GM12878 (cell line): ENCODE measurements at regions of chrX and their contacts with region 1.

Region 1: GRCh38 chrX:137062915-137063617 is 29.3 kb upstream of the GPR101 start:
- DNase-seq: no peak
- ATAC-seq: no peak
- H3K4me3 ChIP-seq: no peak overlapping the region
- H3K27ac ChIP-seq: no peak overlapping the region
- H3K4me1 ChIP-seq: no peaks in the 10 kb centered on the region
- H3K27me3 ChIP-seq: no peaks in the 10 kb centered on the region
- CTCF ChIP-seq: no peak
- EP300 ChIP-seq: no peak
- POLR2A ChIP-seq: no peak
- RAD21 ChIP-seq: no peak

Region 2: DNA sequence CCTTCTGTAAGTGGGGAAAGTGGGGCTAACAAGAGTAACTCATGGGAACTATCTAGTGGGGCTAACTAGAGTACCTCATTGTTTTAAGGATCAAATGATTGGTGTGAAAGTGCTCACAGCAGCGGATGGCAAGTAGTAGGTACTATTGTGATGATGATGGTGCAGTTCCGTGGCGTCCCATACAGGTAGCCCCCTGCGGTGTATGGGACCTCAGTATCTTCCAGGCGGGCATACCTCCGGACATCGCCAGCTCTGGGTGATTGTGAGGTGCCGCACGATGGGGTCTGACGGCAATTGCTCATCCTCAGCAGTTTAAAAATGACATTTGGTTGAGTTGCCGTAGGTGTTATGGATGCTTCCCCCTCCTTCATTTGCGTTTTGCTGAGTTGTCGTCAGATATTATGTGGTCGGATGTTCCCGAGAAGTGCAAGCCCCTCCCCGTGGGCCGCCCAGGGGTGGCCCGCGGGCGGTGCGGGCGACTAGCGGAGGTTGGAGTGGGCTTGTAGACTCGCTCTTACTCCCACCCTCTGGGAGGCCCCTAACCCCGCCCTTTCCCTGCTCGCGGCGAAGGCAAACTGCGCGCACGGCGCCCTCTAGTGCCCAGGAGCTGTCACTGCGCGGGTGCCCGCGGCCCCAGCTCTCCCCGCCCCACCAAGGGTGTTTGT is 11.0 kb before region 1 on chrX:
- CTCF ChIA-PET with region 1: interaction called, 10 read pairs
- POLR2A ChIA-PET with region 1: no interaction called
- RAD21 ChIA-PET with region 1: no interaction called
- SMC1A ChIA-PET with region 1: no interaction called
- in situ Hi-C with region 1: no loop called
- intact Hi-C with region 1: no loop called
- DNase-seq: peak; percentile 1
- ATAC-seq: peak; percentile 99
- H3K4me3 ChIP-seq: peak overlapping the region; percentile 53; the same call in 1 of the 2 replicates
- H3K27ac ChIP-seq: no peak overlapping the region
- H3K4me1 ChIP-seq: no peaks in the 10 kb centered on the region
- H3K27me3 ChIP-seq: 0 out of 4 replicates have a peak, but pooled peaks cover 0 to 3% of the 10 kb centered on the region in 2 experiments
- CTCF ChIP-seq: peak; percentile 71 to 93 (median 82)
- EP300 ChIP-seq: no peak
- POLR2A ChIP-seq: no peak
- RAD21 ChIP-seq: peak; percentile 72